K562 (cell line): ENCODE measurements at regions of chr3 and their contacts with region 1.

Region 1: DNA sequence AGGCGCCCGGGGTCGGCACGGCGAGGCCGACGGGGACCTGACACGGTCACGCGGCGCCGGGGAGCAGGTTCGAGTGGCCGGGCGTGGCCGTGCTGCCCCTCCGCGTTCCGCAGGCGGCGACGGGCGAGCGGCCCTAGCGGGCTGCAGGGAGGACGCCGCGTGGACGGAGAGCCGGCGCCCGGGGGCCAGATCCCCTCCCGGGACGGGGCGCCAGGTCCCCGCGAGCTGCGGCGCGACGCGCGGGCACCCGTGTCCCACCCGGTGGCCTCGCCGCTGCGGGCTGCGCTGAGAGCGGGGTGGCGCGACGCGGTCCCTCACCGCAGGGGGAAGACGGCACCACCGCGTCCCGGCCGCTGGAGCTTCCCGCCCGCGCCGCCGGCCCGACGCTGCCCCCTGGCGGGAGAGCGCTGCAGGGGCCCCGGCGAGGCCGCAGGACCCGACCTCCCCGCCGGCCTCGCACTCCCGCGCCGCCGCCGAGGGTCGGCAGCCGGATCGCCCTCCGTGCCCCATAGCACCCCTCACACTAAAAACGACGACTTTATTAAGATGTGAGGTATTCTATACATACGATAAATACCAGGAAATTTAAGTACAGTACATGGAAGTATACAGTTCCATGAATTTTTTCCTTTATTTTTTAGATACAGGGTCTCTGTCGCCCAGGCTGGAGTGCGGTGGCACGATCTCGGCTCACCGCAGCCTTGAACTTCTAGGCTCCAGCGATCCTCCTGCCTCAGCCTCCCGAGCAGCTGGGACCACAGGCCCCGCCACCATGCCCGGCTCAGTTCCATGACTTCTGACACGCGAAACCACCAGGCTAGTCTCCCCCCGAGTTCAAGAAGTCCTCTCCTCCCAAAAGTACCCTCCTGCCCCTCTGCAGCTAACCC is 1.3 kb upstream of the PIGZ start:
- DNase-seq: peak; percentile 82 to 90 (median 88)
- ATAC-seq: peak; percentile 86
- H3K4me3 ChIP-seq: peak overlapping the region; percentile 71
- H3K27ac ChIP-seq: peak overlapping the region; percentile 94
- H3K4me1 ChIP-seq: peaks cover 20 to 32% of the 10 kb centered on the region in 2 experiments; a peak in 4 of 5 replicates
- H3K27me3 ChIP-seq: no peaks in the 10 kb centered on the region
- CTCF ChIP-seq: peak; percentile 57 to 97 (median 76)
- EP300 ChIP-seq: no peak
- POLR2A ChIP-seq: no peak
- RAD21 ChIP-seq: peak; percentile 78 to 90

Region 2: DNA sequence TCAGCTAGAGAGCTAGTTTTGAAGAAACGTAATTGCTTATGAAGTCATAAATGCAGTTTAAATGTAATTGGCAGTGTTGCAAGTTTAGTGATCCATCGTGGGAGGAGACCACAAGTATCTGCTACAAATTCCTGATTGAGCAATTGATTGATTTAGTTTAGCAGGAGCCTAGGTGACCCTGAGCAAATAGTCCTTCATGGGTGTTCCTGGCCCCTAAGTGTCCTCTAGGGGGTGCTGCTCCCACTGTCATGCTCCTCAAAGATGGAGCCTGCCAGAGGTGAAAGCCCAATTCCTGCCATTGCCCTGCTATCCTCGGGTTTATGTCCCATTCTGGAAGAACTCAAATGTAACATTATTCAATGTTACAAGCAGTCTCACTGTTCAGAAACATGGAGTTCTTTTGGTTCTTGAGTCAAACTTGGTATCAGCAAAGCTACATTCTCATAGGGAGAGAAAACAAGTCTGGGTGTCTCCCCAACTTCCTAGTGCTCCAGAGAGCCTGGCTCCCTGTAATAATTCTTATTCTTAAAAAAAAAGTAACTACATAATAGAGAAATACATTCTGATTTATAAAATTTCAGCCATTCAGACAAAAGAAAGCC is 132.0 kb before region 1 on chr3:
- CTCF ChIA-PET with region 1: interaction called, 10 read pairs
- POLR2A ChIA-PET with region 1: interaction called, 3 read pairs
- in situ Hi-C with region 1: no loop called
- intact Hi-C with region 1: loop called (anchors 1 kb)
- DNase-seq: peak; percentile 72 to 84 (median 78)
- ATAC-seq: peak; percentile 83
- H3K4me3 ChIP-seq: no peak overlapping the region
- H3K27ac ChIP-seq: no peak overlapping the region
- H3K4me1 ChIP-seq: peaks cover 3 to 8% of the 10 kb centered on the region in 2 experiments; a peak in 4 of 5 replicates
- H3K27me3 ChIP-seq: no peaks in the 10 kb centered on the region
- CTCF ChIP-seq: peak; percentile 78 to 92 (median 90)
- EP300 ChIP-seq: no peak
- POLR2A ChIP-seq: no peak
- RAD21 ChIP-seq: peak; percentile 78 to 86

Region 3: DNA sequence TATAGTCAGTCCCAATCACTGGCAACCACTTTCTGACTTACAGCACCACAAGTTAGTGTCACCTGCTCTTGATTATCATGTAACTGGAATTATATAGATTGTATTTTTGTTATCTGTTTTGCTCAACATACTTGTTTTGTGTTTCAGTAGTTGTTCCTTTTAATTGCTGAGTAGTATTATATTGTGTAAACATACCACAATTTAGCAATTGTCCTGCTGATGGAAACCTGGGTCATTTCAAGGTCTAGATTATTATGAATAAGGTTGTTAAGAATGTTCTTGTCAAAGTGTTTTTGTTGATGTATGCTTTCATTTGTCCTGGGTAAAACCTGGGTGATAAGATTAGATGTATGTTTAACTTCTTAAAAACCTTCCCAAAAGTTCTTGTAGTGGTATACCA is 141.8 kb after region 1 on chr3:
- CTCF ChIA-PET with region 1: no interaction called
- POLR2A ChIA-PET with region 1: no interaction called
- in situ Hi-C with region 1: no loop called
- intact Hi-C with region 1: no loop called
- DNase-seq: no peak
- ATAC-seq: no peak
- H3K4me3 ChIP-seq: no peak overlapping the region
- H3K27ac ChIP-seq: no peak overlapping the region
- H3K4me1 ChIP-seq: no peaks in the 10 kb centered on the region
- H3K27me3 ChIP-seq: no peaks in the 10 kb centered on the region
- CTCF ChIP-seq: no peak
- EP300 ChIP-seq: no peak
- POLR2A ChIP-seq: no peak
- RAD21 ChIP-seq: no peak

Region 4: GRCh38 chr3:197567904-197568681 is 598.2 kb after region 1 on chr3:
- CTCF ChIA-PET with region 1: no interaction called
- POLR2A ChIA-PET with region 1: no interaction called
- in situ Hi-C with region 1: no loop called
- intact Hi-C with region 1: no loop called
- DNase-seq: no peak
- ATAC-seq: no peak
- H3K4me3 ChIP-seq: no peak overlapping the region
- H3K27ac ChIP-seq: no peak overlapping the region
- H3K4me1 ChIP-seq: no peaks in the 10 kb centered on the region
- H3K27me3 ChIP-seq: no peaks in the 10 kb centered on the region
- CTCF ChIP-seq: no peak
- EP300 ChIP-seq: no peak
- POLR2A ChIP-seq: no peak
- RAD21 ChIP-seq: no peak